Panc1 (cell line): ENCODE measurements at regions of chr1 and their contacts with region 1.

Region 1: DNA sequence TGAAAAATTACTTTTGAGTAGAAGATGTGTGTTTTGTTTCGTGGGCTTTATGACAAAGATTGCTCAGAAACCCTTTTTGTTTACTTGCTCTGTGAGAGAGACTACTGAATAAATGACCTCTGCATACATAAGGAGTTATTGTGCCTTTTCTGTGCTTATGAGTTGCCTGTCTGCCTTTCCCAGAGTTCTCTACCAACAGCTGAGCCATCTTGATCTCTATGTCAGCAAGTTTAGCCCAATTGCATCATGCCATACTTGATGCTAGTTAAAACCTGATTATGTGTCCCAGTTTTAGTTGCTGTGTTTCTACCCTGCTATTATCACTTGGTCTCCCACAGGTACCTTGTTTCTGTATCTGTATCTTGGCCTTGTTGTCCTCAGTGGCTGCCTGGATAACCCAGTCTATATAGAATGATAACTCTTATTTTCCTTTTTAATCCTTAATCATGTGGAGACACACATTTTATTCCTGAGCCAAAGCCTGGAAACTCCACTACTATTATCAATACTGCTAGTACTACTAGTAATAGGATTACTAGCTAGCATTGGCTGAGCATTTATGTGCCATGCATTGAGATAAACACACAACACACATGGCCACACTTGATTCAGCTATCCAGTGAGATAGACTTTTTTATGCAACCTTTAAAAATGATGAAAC is 28.7 kb upstream of the GNG12 start:
- DNase-seq: no peak
- ATAC-seq: no peak
- H3K4me3 ChIP-seq: no peak overlapping the region
- H3K27ac ChIP-seq: no peak overlapping the region
- H3K4me1 ChIP-seq: no peaks in the 10 kb centered on the region
- H3K27me3 ChIP-seq: no peaks in the 10 kb centered on the region
- CTCF ChIP-seq: no peak

Region 2: GRCh38 chr1:68028566-68028965 is 166.6 kb after region 1 on chr1:
- CTCF ChIA-PET with region 1: no interaction called
- POLR2A ChIA-PET with region 1: no interaction called
- in situ Hi-C with region 1: no loop called
- intact Hi-C with region 1: loop called (anchors 10 kb)
- DNase-seq: no peak
- ATAC-seq: no peak
- H3K4me3 ChIP-seq: no peak overlapping the region
- H3K27ac ChIP-seq: no peak overlapping the region
- H3K4me1 ChIP-seq: no peaks in the 10 kb centered on the region
- H3K27me3 ChIP-seq: no peaks in the 10 kb centered on the region
- CTCF ChIP-seq: no peak